ENCODE measurements at regions of chr17 and their contacts with region 1.

Region 1: GRCh38 chr17:45148183-45149036 is at the start of gene HEXIM1:
- DNase-seq: peak; percentile 100
- H3K4me3 ChIP-seq: peak within 1 kb of the TSS; percentile 60 to 97 (median 87)
- H3K27ac ChIP-seq: peak within 1 kb of the TSS; percentile 100
- H3K4me1 ChIP-seq: peaks cover 16 to 62% (median 47%) of the 10 kb centered on the region in 4 experiments
- H3K27me3 ChIP-seq: no peaks in the 10 kb centered on the region

Region 2: DNA sequence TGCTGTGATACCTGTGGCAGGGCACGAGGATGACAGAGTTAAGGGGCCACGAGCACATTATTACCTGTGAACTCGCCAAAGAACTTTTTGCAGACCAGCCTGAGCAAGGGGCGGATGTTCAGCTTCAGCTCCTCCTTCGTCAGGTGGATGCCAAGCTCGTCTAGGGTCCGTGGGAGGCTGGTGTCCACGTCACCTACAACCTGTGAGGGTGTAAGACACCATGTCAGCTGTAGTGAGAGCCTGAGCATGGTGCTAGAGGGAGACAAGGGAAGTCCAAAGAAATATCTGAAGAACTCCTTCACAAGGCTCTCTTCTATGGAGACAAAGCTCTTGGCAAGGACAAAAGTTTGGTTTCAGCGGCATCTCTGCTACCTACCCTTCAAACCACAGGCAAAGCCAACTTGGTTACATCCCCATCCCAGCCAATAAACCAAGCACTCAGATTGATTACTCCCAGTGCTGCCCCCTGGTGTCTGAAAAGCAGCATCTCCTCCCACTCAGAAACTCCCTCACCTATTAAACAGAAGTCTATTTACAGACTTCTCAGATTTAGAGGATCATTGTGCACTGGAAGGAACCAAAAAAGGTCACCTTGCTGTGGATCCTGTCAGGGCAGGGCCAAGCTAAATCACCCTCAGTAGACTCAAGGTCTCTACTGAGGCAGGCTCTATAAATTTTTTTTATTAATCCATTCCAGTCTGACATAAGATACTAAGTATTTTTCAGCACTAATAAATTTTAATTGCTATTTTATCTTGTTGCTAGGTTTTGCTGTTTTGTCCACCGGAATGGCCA is 283.3 kb before region 1 on chr17:
- CTCF ChIA-PET with region 1: no interaction called
- POLR2A ChIA-PET with region 1: no interaction called
- DNase-seq: peak; percentile 72 to 86 (median 78)
- H3K4me3 ChIP-seq: no peak overlapping the region
- H3K27ac ChIP-seq: no peak overlapping the region
- H3K4me1 ChIP-seq: no peaks in the 10 kb centered on the region
- H3K27me3 ChIP-seq: no peaks in the 10 kb centered on the region

Region 3: DNA sequence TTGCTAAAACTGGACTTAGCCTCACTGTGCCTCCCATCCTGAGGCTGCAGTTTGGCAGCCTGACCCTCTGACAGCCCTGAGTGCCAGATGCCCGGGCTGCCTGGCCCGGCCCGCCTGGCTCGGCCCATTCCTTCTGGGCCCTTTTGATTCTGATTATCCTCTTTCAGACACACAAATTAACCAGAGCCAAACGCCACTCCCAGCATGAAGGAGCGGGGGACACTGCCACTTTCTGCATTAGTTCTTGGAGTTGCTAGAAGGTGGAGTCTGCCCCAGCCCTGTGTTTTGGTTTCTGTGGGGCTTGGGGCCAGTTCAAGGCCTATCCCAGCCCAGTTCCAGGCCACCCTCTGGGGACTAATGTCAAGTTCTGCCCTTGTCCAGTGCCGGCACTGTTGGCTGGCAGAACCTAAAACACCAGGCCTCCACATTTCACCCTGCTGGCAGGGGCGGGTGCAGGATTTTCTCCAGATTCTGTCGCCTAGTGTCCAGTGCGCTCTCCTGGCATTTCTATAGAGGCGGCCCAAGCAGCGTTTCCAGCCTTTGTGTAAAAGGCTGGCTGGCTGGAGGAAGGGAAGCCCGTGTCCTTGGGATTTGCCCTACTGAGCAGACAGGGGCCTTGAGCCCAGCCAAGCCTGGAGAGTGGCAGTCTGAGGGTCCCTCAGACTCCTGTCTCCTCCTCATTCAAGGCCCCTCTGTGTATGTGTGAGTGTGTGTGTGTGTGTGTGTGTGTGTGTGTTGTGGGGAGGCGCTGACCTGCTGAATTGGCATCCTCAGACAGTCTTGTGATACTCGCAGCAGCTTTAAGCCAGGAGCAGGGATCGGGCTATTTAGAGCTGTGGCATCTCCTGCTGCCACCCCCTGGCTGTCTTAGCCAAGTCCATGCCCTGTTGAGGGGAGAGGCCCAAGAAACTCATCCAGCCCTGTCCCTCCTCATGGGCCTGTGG is 37.5 kb before region 1 on chr17:
- CTCF ChIA-PET with region 1: no interaction called
- POLR2A ChIA-PET with region 1: no interaction called
- DNase-seq: no peak
- H3K4me3 ChIP-seq: no peak overlapping the region
- H3K27ac ChIP-seq: no peak overlapping the region
- H3K4me1 ChIP-seq: no peaks in the 10 kb centered on the region
- H3K27me3 ChIP-seq: no peaks in the 10 kb centered on the region

Region 4: DNA sequence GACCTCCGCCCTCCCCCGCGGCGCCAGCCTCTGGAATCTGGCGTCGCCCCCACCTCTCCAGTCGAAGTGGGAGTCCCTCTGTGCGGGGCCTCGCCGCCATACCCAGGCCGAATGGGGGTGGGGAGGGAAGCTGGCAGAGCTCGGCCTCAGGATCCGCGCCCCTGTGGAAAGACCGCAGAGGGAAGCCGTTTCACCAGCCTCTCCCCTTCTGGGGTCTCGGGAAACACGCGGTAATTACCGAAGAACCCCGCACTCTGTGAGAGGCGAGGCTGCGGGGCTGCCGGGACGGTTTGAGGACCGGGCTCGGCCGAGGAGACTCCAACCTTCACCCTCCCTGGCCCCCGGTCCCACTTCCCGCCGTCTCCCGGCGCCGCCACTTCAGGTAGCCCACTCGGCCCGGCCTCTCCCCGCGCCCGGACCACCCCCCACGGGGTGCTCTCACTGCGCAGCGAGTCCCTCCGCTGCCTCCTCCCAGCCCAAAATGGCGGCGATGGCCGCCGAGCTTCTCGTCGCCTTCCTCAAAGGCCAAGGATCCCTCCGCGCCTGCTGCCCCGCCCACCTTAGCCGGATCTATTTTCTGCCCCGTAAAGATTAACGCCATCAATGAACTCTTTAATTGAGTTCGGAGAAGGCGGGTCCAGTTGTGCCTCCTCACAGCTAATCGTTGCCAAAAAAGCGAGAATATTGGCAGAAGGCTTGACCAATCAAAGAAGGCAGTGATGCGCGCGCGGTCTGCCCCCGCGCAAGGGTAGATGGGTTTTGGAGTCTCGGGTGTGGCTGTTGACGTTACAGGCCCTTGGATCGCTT is 12.8 kb after region 1 on chr17:
- CTCF ChIA-PET with region 1: interaction called, 93 read pairs
- POLR2A ChIA-PET with region 1: interaction called, 194 read pairs
- DNase-seq: peak; percentile 100
- H3K4me3 ChIP-seq: peak overlapping the region; percentile 86 to 97 (median 96)
- H3K27ac ChIP-seq: peak overlapping the region; percentile 98 to 99
- H3K4me1 ChIP-seq: peaks cover 13 to 53% (median 45%) of the 10 kb centered on the region in 4 experiments
- H3K27me3 ChIP-seq: no peaks in the 10 kb centered on the region

Region 5: DNA sequence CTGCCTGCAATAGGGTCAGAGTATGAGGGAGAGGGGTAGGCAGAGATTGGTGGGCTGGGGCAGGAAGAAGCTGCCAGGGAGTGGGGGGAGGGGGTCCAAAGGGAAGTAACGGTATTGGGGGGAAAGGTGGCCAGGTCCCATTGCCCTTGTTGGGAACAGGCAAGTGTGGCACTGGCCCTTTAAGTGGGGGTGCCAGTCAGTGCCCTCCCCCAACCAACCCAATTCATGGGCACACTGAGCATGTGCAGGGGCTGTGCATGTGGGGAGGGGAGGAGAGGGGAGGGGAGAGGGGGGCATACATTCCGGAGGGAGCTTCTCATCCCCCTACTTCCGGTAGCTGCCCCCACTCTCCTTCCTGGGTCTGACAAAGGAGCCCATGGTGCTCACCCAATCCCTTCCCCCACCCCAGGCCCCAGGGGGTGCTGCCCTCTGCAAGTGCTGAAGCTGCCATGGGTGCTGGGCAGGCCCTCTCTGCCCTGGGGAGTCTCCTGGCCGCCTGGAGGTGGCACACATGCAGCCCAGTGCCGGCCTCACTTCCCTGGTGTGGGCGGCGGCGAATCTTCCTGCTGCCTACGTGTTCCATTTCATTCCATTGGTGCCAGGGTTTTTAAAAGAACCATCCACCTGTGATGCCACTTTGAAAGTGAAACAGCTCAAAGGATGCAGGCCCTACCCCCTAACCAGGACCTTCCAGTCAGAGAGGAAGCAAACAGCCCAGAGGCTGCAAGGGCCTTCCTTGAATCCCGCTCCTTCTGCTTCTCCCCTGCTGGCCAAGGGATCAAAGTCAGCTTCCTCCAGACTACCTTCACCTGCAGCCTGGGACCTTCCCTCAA is 24.3 kb after region 1 on chr17:
- CTCF ChIA-PET with region 1: interaction called, 19 read pairs
- POLR2A ChIA-PET with region 1: interaction called, 14 read pairs
- DNase-seq: peak; percentile 36 to 73 (median 65)
- H3K4me3 ChIP-seq: peak overlapping the region; percentile 20 to 71 (median 56)
- H3K27ac ChIP-seq: peak overlapping the region in 1 of 2 experiments; percentile 25
- H3K4me1 ChIP-seq: peaks cover 0 to 44% (median 40%) of the 10 kb centered on the region in 4 experiments
- H3K27me3 ChIP-seq: no peaks in the 10 kb centered on the region

Region 6: GRCh38 chr17:45190503-45191255 is 42.3 kb after region 1 on chr17:
- CTCF ChIA-PET with region 1: interaction called, 99 read pairs
- POLR2A ChIA-PET with region 1: interaction called, 7 read pairs
- DNase-seq: no peak
- H3K4me3 ChIP-seq: no peak overlapping the region
- H3K27ac ChIP-seq: no peak overlapping the region
- H3K4me1 ChIP-seq: peaks cover 0 to 4% (median under 1%) of the 10 kb centered on the region in 4 experiments
- H3K27me3 ChIP-seq: no peaks in the 10 kb centered on the region

Region 7: GRCh38 chr17:45197555-45198334 is 49.3 kb after region 1 on chr17:
- CTCF ChIA-PET with region 1: interaction called, 99 read pairs
- POLR2A ChIA-PET with region 1: interaction called, 35 read pairs
- DNase-seq: peak; percentile 85 to 87 (median 87)
- H3K4me3 ChIP-seq: peak overlapping the region in 3 of 7 experiments; percentile 2 to 34 (median 16)
- H3K27ac ChIP-seq: no peak overlapping the region
- H3K4me1 ChIP-seq: peaks cover 0 to 20% (median 10%) of the 10 kb centered on the region in 4 experiments
- H3K27me3 ChIP-seq: no peaks in the 10 kb centered on the region

Region 8: GRCh38 chr17:45228763-45229539 is 80.5 kb after region 1 on chr17:
- CTCF ChIA-PET with region 1: interaction called, 13 read pairs
- POLR2A ChIA-PET with region 1: interaction called, 18 read pairs
- DNase-seq: peak; percentile 88 to 94 (median 93)
- H3K4me3 ChIP-seq: peak overlapping the region in 6 of 7 experiments; percentile 31 to 92 (median 54)
- H3K27ac ChIP-seq: peak overlapping the region; percentile 87 to 96
- H3K4me1 ChIP-seq: peaks cover 17 to 94% (median 78%) of the 10 kb centered on the region in 4 experiments
- H3K27me3 ChIP-seq: no peaks in the 10 kb centered on the region

Region 9: GRCh38 chr17:45235416-45236281 is 87.2 kb after region 1 on chr17:
- CTCF ChIA-PET with region 1: interaction called, 13 read pairs
- POLR2A ChIA-PET with region 1: interaction called, 5 read pairs
- DNase-seq: peak; percentile 82 to 90 (median 83)
- H3K4me3 ChIP-seq: no peak overlapping the region
- H3K27ac ChIP-seq: peak overlapping the region in 1 of 2 experiments; percentile 19
- H3K4me1 ChIP-seq: peaks cover 11 to 44% (median 23%) of the 10 kb centered on the region in 4 experiments
- H3K27me3 ChIP-seq: no peaks in the 10 kb centered on the region